ENCODE measurements at regions of chr3 and their contacts with region 1.

Region 1: GRCh38 chr3:59575113-59576001 is 525.5 kb upstream of the CFAP20DC start:
- DNase-seq: peak; percentile 74
- H3K4me3 ChIP-seq: no peak overlapping the region
- H3K27ac ChIP-seq: no peak overlapping the region
- H3K4me1 ChIP-seq: no peaks in the 10 kb centered on the region
- CTCF ChIP-seq: peak; percentile 96

Region 2: DNA sequence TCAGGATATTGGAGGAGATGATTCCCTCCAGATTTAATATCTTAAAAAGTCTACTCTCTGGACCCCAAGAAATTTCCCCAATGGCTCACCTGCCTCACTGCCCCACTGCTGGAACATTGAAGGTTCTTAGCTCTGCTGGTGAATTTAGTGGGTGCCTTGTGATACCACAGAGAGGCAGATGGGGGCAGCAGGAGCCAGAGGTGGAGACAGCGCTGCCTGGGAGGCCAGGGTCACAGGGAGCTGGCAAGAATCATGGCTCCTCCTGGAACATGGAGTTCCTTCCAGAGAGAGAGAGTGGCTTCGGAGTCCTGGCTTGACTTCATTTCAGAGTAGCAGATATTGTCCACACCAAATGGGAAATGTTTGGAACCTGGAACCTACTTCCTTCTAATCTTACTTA is 262.0 kb before region 1 on chr3:
- CTCF ChIA-PET with region 1: interaction called, 4 read pairs
- POLR2A ChIA-PET with region 1: no interaction called
- intact Hi-C with region 1: loop called (anchors 10 kb)
- DNase-seq: peak; percentile 19
- H3K4me3 ChIP-seq: no peak overlapping the region
- H3K27ac ChIP-seq: no peak overlapping the region
- H3K4me1 ChIP-seq: no peaks in the 10 kb centered on the region
- CTCF ChIP-seq: peak; percentile 76

Region 3: DNA sequence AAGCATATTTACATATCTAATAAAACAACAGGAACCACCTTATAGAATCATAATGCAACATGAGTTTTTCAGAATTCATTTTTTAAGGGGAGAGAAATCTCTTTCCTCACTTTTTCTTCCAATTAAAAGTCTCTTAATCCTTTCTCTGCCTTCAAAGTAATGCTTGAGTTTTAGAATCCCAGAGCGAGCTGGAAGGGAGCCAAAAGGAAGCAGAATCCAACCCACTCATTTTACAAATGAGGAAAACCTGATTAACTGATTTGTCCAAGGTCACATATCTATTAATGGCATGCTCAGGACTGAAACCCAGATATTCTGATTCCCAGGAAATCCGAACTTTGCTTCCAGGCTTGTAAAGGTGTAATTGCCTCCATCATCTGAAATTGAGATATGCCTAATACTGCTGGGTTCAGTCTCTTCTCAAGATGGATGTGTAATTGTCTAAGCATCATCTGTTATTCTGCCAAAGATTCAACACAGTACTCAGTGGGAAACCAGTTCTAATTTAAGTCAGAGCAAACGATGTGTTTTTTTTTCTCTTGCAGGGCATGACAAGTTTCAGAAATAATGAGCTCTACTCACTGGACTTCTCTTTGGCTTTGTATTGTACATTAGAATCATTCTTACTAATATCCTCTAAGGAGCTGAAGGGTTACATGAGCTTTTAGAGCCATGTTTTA is 44.2 kb before region 1 on chr3:
- CTCF ChIA-PET with region 1: no interaction called
- POLR2A ChIA-PET with region 1: no interaction called
- intact Hi-C with region 1: no loop called
- DNase-seq: no peak
- H3K4me3 ChIP-seq: no peak overlapping the region
- H3K27ac ChIP-seq: no peak overlapping the region
- H3K4me1 ChIP-seq: no peaks in the 10 kb centered on the region
- CTCF ChIP-seq: no peak